Activated B cell treated with CpG ODN at 0.5 μM for 24 hours (primary cell): ENCODE measurements at regions of chr17 and their contacts with region 1.

Region 1: GRCh38 chr17:78970834-78971773 is 8.6 kb downstream of the LGALS3BP start:
- DNase-seq: peak; percentile 70
- ATAC-seq: peak; percentile 88
- H3K4me3 Mint-ChIP-seq: no peak overlapping the region
- H3K27ac Mint-ChIP-seq: no peak overlapping the region
- H3K4me1 Mint-ChIP-seq: peaks cover 7% of the 10 kb centered on the region
- H3K27me3 Mint-ChIP-seq: no peaks in the 10 kb centered on the region
- CTCF ChIP-seq: peak; percentile 32

Region 2: DNA sequence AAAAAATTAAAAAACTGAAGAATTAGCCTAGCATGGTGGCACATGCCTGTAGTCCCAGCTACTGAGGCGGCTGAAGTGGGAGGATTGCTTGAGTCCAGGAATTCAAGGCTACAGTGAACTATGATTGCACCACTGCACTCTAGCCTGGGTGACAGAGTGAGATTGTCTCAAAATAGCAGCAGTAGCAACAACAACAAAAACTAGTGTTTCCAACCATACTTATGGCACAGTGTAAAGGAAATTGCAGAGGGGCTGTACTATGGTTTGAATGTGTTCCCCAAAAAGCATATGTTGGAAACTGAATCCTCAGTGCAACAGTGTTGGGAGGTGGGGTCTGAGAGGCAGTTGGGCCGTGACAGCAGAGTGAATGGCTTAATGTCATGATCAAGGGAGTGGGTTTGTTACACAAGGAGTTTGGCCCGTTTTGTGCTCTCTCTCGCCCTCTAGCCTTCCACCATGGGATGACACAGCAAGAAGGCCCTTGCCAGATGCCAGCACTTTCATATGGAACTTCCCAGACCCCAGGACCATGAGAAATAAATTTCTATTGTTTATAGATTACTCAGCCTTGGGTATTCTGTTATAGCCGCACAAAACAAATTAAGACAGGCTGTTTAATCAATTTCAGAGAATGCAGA is 522.6 kb before region 1 on chr17:
- CTCF ChIA-PET with region 1: no interaction called
- POLR2A ChIA-PET with region 1: no interaction called
- intact Hi-C with region 1: loop called (anchors 5 kb)
- DNase-seq: no peak
- ATAC-seq: no peak
- H3K4me3 Mint-ChIP-seq: no peak overlapping the region
- H3K27ac Mint-ChIP-seq: no peak overlapping the region
- H3K4me1 Mint-ChIP-seq: peaks cover 8% of the 10 kb centered on the region
- H3K27me3 Mint-ChIP-seq: peaks cover 5% of the 10 kb centered on the region
- CTCF ChIP-seq: no peak

Region 3: GRCh38 chr17:78497115-78497540 is 474.0 kb before region 1 on chr17:
- CTCF ChIA-PET with region 1: interaction called, 10 read pairs
- POLR2A ChIA-PET with region 1: no interaction called
- intact Hi-C with region 1: no loop called
- DNase-seq: peak; percentile 26
- ATAC-seq: peak; percentile 77
- H3K4me3 Mint-ChIP-seq: no peak overlapping the region
- H3K27ac Mint-ChIP-seq: no peak overlapping the region
- H3K4me1 Mint-ChIP-seq: no peaks in the 10 kb centered on the region
- H3K27me3 Mint-ChIP-seq: no peaks in the 10 kb centered on the region
- CTCF ChIP-seq: peak; percentile 19

Region 4: DNA sequence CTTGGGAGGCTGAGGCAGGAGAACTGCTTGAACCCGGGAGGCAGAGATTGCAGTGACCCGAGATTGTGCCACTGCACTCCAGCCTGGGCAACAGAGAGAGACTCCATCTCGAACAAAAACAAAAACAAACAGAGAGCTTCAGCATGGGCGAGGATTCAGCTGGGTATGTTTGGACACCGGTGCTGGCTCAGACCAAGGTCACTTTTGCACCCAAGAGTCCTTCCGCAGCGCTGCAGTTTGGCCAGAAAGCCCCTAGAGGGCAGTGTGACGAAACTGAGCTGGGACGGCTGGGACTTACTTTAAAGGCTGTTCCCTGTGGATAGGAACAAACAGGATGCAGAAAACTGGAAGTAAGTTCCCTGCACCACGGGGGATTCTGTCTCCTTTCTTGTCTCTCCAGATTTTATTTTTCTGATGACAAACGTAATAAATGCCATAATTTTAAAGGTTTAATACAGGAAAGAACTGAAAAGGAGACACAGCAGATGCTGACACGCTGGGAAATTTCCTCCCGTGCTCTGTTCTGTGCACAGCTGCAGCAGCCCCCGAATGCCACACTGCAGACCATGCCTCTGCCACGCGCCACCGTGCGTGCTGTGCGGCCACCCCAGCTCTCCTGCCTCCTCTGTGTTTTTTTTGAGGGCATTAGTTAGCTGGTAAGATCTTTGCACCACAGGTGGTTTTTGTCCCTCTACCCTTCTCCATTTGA is 105.3 kb before region 1 on chr17:
- CTCF ChIA-PET with region 1: interaction called, 54 read pairs
- POLR2A ChIA-PET with region 1: interaction called, 3 read pairs
- intact Hi-C with region 1: loop called (anchors 1 kb)
- DNase-seq: peak; percentile 66
- ATAC-seq: peak; percentile 81
- H3K4me3 Mint-ChIP-seq: no peak overlapping the region
- H3K27ac Mint-ChIP-seq: no peak overlapping the region
- H3K4me1 Mint-ChIP-seq: peaks cover 3% of the 10 kb centered on the region
- H3K27me3 Mint-ChIP-seq: peaks cover 5% of the 10 kb centered on the region
- CTCF ChIP-seq: peak; percentile 34

Region 5: DNA sequence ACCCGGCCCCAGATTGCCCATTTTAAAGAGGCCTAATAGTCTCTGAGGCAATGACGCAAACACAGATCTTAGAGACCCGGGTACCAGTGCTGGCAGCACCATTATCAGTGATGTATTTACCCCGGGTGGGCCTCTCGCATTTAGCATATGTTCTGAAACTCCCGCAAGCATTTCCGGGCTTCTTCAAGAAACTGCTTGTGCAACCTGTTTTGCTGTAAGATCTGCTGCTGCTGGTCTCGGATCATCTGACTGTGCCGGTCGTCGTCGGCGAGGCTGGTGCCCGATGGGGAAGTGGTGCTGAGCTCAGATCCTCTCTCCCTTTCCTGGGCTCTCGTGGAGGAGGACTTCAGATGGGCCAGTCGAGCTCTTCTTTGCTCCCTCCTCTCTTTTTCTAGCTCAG is 80.6 kb before region 1 on chr17:
- CTCF ChIA-PET with region 1: interaction called, 6 read pairs
- POLR2A ChIA-PET with region 1: interaction called, 3 read pairs
- intact Hi-C with region 1: loop called (anchors 2 kb)
- DNase-seq: peak; percentile 46
- ATAC-seq: peak; percentile 60
- H3K4me3 Mint-ChIP-seq: peak overlapping the region; percentile 60
- H3K27ac Mint-ChIP-seq: peak overlapping the region; percentile 94
- H3K4me1 Mint-ChIP-seq: peaks cover 59% of the 10 kb centered on the region
- H3K27me3 Mint-ChIP-seq: no peaks in the 10 kb centered on the region
- CTCF ChIP-seq: no peak

Region 6: DNA sequence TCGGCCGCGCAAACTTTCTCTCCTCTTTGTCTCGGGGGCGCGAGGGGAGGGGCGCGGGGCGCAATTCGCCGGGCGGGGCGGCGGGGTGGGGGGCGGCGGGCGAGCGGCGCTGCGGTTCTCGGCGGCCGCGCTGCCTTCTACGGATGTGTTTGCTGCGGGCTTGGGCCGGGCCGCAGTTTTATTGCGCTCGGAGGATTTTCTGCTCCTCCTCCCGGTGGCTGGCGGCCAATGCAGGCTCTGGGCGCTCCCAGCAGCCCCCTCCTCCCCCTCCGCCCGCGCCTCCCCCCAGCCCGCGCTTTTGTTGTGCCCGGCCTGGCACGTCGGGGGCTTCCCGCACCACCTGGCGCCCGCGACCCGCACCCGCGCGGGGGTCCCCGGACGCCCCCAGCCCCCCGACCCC is 45.9 kb before region 1 on chr17 and contains the start of gene TIMP2:
- CTCF ChIA-PET with region 1: interaction called, 3 read pairs
- POLR2A ChIA-PET with region 1: no interaction called
- intact Hi-C with region 1: loop called (anchors 1 kb)
- DNase-seq: peak; percentile 62
- ATAC-seq: peak; percentile 81
- H3K4me3 Mint-ChIP-seq: peak within 1 kb of the TSS; percentile 86
- H3K27ac Mint-ChIP-seq: no peak within 1 kb of the TSS
- H3K4me1 Mint-ChIP-seq: peaks cover 15% of the 10 kb centered on the region
- H3K27me3 Mint-ChIP-seq: peaks cover 15% of the 10 kb centered on the region
- CTCF ChIP-seq: no peak
- total RNA-seq, gene TIMP2: 3.5 and 4.2 TPM in 2 replicates

Region 7: GRCh38 chr17:78939615-78940014 is 31.5 kb before region 1 on chr17:
- CTCF ChIA-PET with region 1: no interaction called
- POLR2A ChIA-PET with region 1: no interaction called
- intact Hi-C with region 1: no loop called
- DNase-seq: no peak
- ATAC-seq: no peak
- H3K4me3 Mint-ChIP-seq: no peak overlapping the region
- H3K27ac Mint-ChIP-seq: no peak overlapping the region
- H3K4me1 Mint-ChIP-seq: no peaks in the 10 kb centered on the region
- H3K27me3 Mint-ChIP-seq: no peaks in the 10 kb centered on the region
- CTCF ChIP-seq: no peak

Region 8: GRCh38 chr17:79087428-79088143 is 116.5 kb after region 1 on chr17:
- CTCF ChIA-PET with region 1: no interaction called
- POLR2A ChIA-PET with region 1: no interaction called
- intact Hi-C with region 1: no loop called
- DNase-seq: peak; percentile 79
- ATAC-seq: peak; percentile 90
- H3K4me3 Mint-ChIP-seq: no peak overlapping the region
- H3K27ac Mint-ChIP-seq: no peak overlapping the region
- H3K4me1 Mint-ChIP-seq: no peaks in the 10 kb centered on the region
- H3K27me3 Mint-ChIP-seq: peaks cover 3% of the 10 kb centered on the region
- CTCF ChIP-seq: peak; percentile 86

Region 9: GRCh38 chr17:79114458-79115301 is 143.6 kb after region 1 on chr17:
- CTCF ChIA-PET with region 1: no interaction called
- POLR2A ChIA-PET with region 1: no interaction called
- intact Hi-C with region 1: no loop called
- DNase-seq: no peak
- ATAC-seq: no peak
- H3K4me3 Mint-ChIP-seq: no peak overlapping the region
- H3K27ac Mint-ChIP-seq: no peak overlapping the region
- H3K4me1 Mint-ChIP-seq: no peaks in the 10 kb centered on the region
- H3K27me3 Mint-ChIP-seq: peaks cover 13% of the 10 kb centered on the region
- CTCF ChIP-seq: no peak

Region 10: DNA sequence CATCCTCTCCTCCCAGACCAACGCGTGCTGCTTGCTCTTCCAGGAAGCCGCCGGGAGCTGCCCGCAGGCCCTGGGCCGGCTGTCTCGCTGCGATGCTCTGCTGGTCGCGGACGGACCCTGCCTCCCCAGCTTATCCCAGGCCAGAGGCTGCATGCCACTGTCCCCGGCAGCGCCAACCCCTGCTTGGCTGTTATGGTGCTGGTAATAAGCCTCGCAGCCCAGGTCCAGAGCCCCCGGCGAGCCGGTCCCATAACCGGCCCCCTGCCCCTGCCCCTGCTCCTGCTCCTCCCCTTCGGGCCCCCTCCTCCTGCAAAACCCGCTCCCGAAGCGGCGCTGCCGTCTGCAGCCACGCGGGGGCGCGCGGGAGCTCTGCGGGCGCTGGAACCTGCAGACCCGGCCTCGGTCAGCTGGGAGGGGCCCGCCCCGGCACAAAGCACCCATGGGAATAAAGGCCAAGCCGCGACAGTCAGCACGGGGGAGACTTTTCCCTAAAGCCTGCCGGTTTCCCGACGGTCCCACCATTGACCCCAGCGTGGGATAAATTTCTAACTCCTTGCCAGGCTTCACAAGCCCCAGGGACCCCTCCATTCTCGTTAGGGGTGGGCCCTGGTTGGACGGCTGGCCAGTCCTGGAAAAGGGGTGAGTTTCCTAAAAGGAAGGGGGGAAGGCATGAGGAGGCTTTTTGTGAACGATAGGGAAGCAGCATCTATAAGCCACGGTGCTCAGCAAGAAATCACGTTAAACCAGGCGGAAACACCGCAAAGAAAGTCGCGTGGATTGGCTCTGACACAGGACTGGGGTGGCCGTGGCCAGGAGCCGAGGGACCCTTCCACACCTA is 770.9 kb after region 1 on chr17:
- CTCF ChIA-PET with region 1: no interaction called
- POLR2A ChIA-PET with region 1: no interaction called
- intact Hi-C with region 1: no loop called
- DNase-seq: peak; percentile 81
- ATAC-seq: peak; percentile 83
- H3K4me3 Mint-ChIP-seq: no peak overlapping the region
- H3K27ac Mint-ChIP-seq: no peak overlapping the region
- H3K4me1 Mint-ChIP-seq: peaks cover 15% of the 10 kb centered on the region
- H3K27me3 Mint-ChIP-seq: peaks cover 32% of the 10 kb centered on the region
- CTCF ChIP-seq: peak; percentile 58